ENCODE measurements at regions of chr6 and their contacts with region 1.

Region 1: GRCh38 chr6:119742188-119742803 is 392.7 kb upstream of the MAN1A1 start:
- DNase-seq: peak; percentile 16
- H3K4me3 Mint-ChIP-seq: no peak overlapping the region
- H3K27ac Mint-ChIP-seq: no peak overlapping the region
- H3K4me1 Mint-ChIP-seq: no peaks in the 10 kb centered on the region
- H3K27me3 Mint-ChIP-seq: peaks cover 10% of the 10 kb centered on the region

Region 2: DNA sequence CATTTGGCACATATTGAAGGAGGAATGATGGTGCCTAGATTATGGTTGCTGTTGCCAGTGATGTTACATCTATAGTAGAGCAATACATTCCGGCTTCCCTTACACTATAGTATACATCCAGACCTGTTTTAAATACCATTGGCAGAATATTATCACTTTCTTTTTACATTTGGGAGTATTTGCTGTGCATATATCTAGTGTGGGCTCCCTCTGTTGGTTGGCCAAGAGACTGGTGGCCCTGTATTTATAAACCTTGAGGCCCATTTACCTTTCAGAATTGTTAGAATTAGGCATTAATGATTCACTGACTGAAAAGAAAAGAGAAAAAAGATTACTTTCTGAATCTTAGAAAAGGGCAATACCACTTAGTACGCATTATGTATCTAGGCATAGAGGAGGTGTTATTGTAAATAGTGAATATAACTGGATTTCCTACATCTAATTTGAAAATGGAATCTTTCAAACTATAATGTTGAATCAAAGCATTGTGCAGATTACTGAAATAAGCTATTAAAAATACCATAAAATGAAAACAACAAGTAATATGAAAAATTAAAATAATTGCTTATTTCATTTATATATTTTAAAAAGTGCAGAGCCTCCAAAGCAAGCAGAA is 236.1 kb after region 1 on chr6:
- intact Hi-C with region 1: loop called (anchors 5 kb)
- DNase-seq: no peak
- H3K4me3 Mint-ChIP-seq: no peak overlapping the region
- H3K27ac Mint-ChIP-seq: no peak overlapping the region
- H3K4me1 Mint-ChIP-seq: no peaks in the 10 kb centered on the region
- H3K27me3 Mint-ChIP-seq: peaks cover 2% of the 10 kb centered on the region

Region 3: DNA sequence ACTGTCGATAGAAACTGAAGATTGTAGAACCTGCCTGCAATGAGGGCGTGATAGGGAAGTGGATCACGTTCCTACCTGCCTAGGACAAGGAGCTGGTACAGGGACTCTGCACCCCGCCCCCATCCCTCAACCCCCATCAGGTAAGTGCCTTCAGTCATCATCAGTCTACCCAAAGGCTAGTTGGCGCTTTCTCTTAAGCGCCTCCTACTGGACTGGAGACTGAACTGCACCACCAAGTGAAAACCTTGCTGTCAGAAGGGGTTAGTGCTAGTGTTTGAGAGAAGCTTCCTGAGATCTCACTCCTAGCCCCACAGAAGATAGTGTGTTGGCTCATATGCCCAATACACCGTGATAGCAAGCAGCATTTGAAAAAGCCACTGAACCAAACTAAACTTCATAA is 313.8 kb after region 1 on chr6:
- intact Hi-C with region 1: loop called (anchors 1 kb)
- DNase-seq: no peak
- H3K4me3 Mint-ChIP-seq: no peak overlapping the region
- H3K27ac Mint-ChIP-seq: no peak overlapping the region
- H3K4me1 Mint-ChIP-seq: no peaks in the 10 kb centered on the region
- H3K27me3 Mint-ChIP-seq: no peaks in the 10 kb centered on the region

Region 4: DNA sequence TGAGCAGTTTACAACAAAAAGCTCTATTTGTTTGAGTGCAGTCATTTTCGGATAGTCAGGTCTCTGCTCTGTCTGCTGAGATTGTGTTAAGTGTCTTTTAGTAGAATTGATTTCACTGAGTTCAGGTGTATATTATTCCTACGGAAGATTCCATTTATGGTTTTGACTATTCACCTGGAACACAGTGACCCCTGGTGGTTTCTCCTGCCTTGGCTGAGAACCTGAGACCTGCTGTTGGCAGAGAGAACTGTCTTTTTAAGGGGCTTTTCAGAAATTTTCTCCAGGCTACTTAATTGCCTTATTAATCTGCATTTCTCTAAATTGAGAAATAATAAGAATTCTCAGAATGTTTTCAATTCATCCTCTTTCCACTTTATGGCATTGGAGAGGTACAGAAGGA is 1084.0 kb after region 1 on chr6:
- intact Hi-C with region 1: loop called (anchors 2 kb)
- DNase-seq: no peak
- H3K4me3 Mint-ChIP-seq: no peak overlapping the region
- H3K27ac Mint-ChIP-seq: no peak overlapping the region
- H3K4me1 Mint-ChIP-seq: no peaks in the 10 kb centered on the region
- H3K27me3 Mint-ChIP-seq: no peaks in the 10 kb centered on the region

Region 5: GRCh38 chr6:121305957-121306607 is 1563.8 kb after region 1 on chr6:
- intact Hi-C with region 1: loop called (anchors 2 kb)
- DNase-seq: no peak
- H3K4me3 Mint-ChIP-seq: no peak overlapping the region
- H3K27ac Mint-ChIP-seq: no peak overlapping the region
- H3K4me1 Mint-ChIP-seq: peaks cover 5% of the 10 kb centered on the region
- H3K27me3 Mint-ChIP-seq: no peaks in the 10 kb centered on the region